Activated B cell treated with CpG ODN at 0.5 μM for 24 hours (primary cell): ENCODE measurements at regions of chr4 and their contacts with region 1.

Region 1: GRCh38 chr4:173243917-173244658 is 75.5 kb downstream of the GALNT7 start:
- DNase-seq: no peak
- ATAC-seq: no peak
- H3K4me3 Mint-ChIP-seq: no peak overlapping the region
- H3K27ac Mint-ChIP-seq: no peak overlapping the region
- H3K4me1 Mint-ChIP-seq: peaks cover 54% of the 10 kb centered on the region
- H3K27me3 Mint-ChIP-seq: no peaks in the 10 kb centered on the region
- CTCF ChIP-seq: no peak

Region 2: GRCh38 chr4:173218411-173219125 is 25.5 kb before region 1 on chr4:
- CTCF ChIA-PET with region 1: no interaction called
- POLR2A ChIA-PET with region 1: no interaction called
- intact Hi-C with region 1: loop called (anchors 2 kb)
- DNase-seq: no peak
- ATAC-seq: no peak
- H3K4me3 Mint-ChIP-seq: no peak overlapping the region
- H3K27ac Mint-ChIP-seq: no peak overlapping the region
- H3K4me1 Mint-ChIP-seq: peaks cover 30% of the 10 kb centered on the region
- H3K27me3 Mint-ChIP-seq: no peaks in the 10 kb centered on the region
- CTCF ChIP-seq: no peak

Region 3: GRCh38 chr4:173319696-173320095 is 75.6 kb after region 1 on chr4:
- CTCF ChIA-PET with region 1: no interaction called
- POLR2A ChIA-PET with region 1: no interaction called
- intact Hi-C with region 1: no loop called
- DNase-seq: no peak
- ATAC-seq: no peak
- H3K4me3 Mint-ChIP-seq: no peak overlapping the region
- H3K27ac Mint-ChIP-seq: no peak overlapping the region
- H3K4me1 Mint-ChIP-seq: no peaks in the 10 kb centered on the region
- H3K27me3 Mint-ChIP-seq: no peaks in the 10 kb centered on the region
- CTCF ChIP-seq: no peak